ENCODE measurements at regions of chr4 and their contacts with region 1.

Region 1: GRCh38 chr4:114082348-114082747 is 102.9 kb upstream of the ARSJ start:
- DNase-seq: no peak
- H3K4me3 ChIP-seq: no peak overlapping the region
- H3K27ac ChIP-seq: no peak overlapping the region
- H3K4me1 ChIP-seq: peaks cover 0 to 6% (median 0%) of the 10 kb centered on the region in 3 donors
- H3K27me3 ChIP-seq: no peaks in the 10 kb centered on the region
- CTCF ChIP-seq: no peak
- POLR2A ChIP-seq: no peak

Region 2: GRCh38 chr4:114103908-114104307 is 21.6 kb after region 1 on chr4:
- intact Hi-C with region 1: loop called (anchors 2 kb)
- DNase-seq: no peak
- H3K4me3 ChIP-seq: no peak overlapping the region
- H3K27ac ChIP-seq: no peak overlapping the region
- H3K4me1 ChIP-seq: no peaks in the 10 kb centered on the region
- H3K27me3 ChIP-seq: no peaks in the 10 kb centered on the region
- CTCF ChIP-seq: no peak
- POLR2A ChIP-seq: no peak

Region 3: DNA sequence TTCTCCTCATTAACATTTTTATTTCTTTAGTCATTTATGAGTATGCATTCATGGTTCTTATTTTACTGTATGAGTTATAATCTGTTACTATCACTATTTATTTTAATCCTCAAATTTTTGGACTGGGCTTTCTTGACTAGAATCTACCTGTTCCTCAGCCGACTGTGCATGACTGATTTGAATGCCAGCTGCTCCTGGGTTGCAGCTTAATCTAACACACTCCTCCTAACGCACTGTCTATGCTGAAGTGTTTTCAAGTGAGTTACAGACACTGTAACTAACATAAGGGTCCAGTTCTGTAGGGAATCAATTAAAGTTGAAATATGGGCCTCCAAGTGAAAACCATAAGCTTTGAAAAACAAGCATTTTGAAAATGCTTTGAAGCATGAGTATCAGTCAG is 34.5 kb after region 1 on chr4:
- intact Hi-C with region 1: no loop called
- DNase-seq: no peak
- H3K4me3 ChIP-seq: no peak overlapping the region
- H3K27ac ChIP-seq: no peak overlapping the region
- H3K4me1 ChIP-seq: no peaks in the 10 kb centered on the region
- H3K27me3 ChIP-seq: no peaks in the 10 kb centered on the region
- CTCF ChIP-seq: no peak
- POLR2A ChIP-seq: no peak

Region 4: DNA sequence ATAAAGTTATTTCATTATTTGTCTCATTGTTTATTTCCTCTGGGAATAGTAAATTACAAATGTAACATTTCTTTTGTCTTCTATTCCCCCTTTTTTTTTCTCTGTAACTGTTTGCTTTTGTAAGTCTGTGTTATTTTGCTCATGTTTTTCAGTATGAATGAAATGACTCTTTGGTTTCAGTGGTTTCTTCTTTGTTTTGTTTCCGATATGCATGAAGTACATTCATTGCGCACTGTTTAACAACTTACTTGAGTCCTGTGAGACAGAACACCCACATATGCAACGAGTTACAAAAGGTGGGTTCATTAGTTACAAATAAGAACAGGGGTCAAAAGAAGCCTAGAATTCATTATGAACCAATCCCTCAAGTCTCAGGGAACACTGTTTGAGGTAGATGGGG is 341.2 kb after region 1 on chr4:
- intact Hi-C with region 1: no loop called
- DNase-seq: no peak
- H3K4me3 ChIP-seq: no peak overlapping the region
- H3K27ac ChIP-seq: no peak overlapping the region
- H3K4me1 ChIP-seq: no peaks in the 10 kb centered on the region
- H3K27me3 ChIP-seq: no peaks in the 10 kb centered on the region
- CTCF ChIP-seq: no peak
- POLR2A ChIP-seq: no peak

Measured in esophagus squamous epithelium (tissue), 5 donors.